Heart left ventricle (tissue), 16 donors: ENCODE measurements at regions of chr2 and their contacts with region 1.

Region 1: DNA sequence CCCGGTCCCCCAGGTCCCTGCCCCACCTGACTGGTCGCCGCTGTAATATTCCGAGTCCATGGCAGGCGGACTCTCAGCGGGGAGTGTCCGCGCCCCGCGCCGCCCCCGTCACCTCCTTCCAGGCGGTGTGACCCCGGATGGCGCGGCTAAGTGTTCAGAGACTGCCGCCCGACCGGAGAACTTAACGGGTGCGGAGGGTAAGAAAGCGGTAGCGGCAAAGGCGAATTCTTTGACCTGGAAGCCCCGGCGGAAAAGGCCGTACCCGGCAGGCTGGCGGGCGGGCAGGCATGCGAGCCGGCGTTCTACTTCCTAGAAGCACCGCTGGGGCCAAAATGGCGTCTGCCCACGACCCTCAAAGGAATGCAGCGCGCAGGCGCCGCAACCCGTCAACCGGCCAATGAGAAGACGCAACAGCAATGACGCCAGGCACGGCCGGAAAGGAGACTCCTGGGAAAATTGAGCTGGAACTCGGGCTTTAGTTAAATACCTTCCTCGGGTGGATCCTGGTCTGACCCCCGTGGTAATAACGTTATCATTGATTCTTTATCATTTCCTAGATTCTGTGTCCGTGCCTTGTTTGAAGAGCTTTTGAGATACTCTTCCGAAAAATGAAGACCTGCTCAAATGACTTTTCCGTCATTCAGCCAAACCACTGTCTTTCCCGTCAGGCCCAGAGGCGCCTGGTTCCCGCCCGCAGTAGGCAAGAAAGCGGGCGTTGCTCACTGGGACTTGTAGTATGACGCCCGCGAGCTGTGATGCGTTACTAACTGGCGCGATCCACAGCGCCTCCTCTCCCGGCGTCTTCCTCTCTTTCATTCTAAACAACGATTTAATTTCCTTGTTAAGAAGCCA is at the start of gene IWS1:
- DNase-seq: peak; percentile 95 to 98 (median 97)
- ATAC-seq: peak; percentile 96 to 98 (median 97)
- H3K4me3 ChIP-seq: peak within 1 kb of the TSS; percentile 81 to 100 (median 96)
- H3K27ac ChIP-seq: peak within 1 kb of the TSS; percentile 80 to 98 (median 95)
- H3K4me1 ChIP-seq: peaks cover 0 to 31% (median 14%) of the 10 kb centered on the region in 12 donors
- H3K27me3 ChIP-seq: no peaks in the 10 kb centered on the region
- CTCF ChIP-seq: peak; percentile 9 to 51 (median 37)
- POLR2A ChIP-seq: peak in 1 of 2 donors; percentile 56
- total RNA-seq, gene IWS1: 37.6 to 62.2 (median 45.8) TPM

Region 2: GRCh38 chr2:127379712-127380355 is 146.5 kb before region 1 on chr2:
- intact Hi-C with region 1: loop called in 1 of 10 experiments (anchors 5 kb)
- DNase-seq: no peak
- ATAC-seq: no peak
- H3K4me3 ChIP-seq: no peak overlapping the region
- H3K27ac ChIP-seq: no peak overlapping the region
- H3K4me1 ChIP-seq: peaks cover 0 to 64% (median 44%) of the 10 kb centered on the region in 12 donors
- H3K27me3 ChIP-seq: no peaks in the 10 kb centered on the region
- CTCF ChIP-seq: no peak
- POLR2A ChIP-seq: no peak

Region 3: DNA sequence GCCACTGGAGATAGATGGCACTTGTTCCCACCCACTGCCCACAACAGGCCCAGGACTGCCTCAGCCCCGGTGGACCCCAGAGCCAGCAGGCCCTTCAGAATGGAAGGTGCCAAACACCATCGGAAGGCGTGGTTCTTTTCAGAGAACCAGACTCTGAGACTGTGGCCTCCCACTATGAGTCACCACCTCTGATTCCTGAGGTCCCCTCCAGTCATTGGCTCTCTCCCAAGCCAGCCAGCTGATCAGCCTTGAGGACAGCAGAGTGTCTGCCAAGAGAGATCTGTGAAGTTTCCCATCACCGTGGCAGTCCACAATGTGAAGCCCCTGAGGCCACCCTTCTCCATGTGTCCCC is 128.2 kb before region 1 on chr2:
- intact Hi-C with region 1: no loop called
- DNase-seq: peak; percentile 79 to 97 (median 88)
- ATAC-seq: peak; percentile 81 to 97 (median 94)
- H3K4me3 ChIP-seq: no peak overlapping the region
- H3K27ac ChIP-seq: no peak overlapping the region
- H3K4me1 ChIP-seq: peaks cover 0 to 22% (median 9%) of the 10 kb centered on the region in 12 donors
- H3K27me3 ChIP-seq: no peaks in the 10 kb centered on the region
- CTCF ChIP-seq: no peak
- POLR2A ChIP-seq: no peak

Region 4: DNA sequence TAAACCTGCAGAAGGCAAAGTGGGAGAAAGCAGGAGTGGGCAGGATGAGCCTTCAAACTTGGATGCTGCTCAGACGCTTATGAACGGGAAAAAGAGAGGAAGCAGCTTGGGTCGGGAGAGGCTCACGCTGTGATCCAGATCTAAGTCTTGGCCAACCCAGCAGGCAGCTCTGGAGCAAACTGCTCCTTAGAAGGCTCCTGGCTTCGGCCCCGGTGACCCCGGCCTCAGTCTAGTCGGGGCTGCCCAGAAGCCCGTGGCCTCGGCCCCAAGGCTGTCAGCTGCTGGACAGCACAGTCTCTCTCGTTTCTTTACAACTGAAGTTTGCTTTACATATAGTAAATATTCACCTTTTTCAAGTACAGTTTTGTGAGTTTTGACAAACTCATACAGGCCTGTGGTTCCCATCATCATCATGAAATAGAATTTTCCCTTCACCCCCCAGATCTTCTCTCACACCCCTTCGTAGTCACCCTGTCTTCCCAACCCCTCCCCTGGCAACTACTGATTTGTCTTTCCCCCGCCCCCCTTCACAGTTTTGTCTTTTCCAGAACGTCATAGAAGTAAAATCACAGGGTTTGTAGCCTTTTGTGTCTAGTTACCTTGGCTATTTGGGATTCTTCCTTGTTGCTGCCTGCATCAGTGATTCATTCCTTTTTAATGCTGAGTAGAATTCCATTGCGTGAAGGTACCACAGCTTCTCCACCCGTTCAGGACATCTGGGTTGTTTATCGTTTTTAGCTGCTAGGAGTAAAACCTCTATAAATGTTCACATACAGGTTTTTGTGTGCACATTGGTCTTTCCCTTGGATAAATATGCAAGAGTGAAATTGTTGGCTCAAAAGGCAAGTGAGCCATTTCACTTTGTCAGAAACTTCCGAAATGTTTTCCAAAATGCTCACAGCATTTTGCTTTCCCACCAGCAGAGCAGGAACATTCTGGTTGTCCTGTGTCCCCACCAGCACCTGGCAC is 44.2 kb after region 1 on chr2:
- intact Hi-C with region 1: loop called in 1 of 10 experiments (anchors 5 kb)
- DNase-seq: peak in 2 of 5 donors; percentile 39 to 56
- ATAC-seq: peak in 3 of 4 donors; percentile 23 to 48 (median 34)
- H3K4me3 ChIP-seq: no peak overlapping the region
- H3K27ac ChIP-seq: peak overlapping the region in 1 of 12 donors; percentile 34
- H3K4me1 ChIP-seq: peaks cover 3 to 38% (median 19%) of the 10 kb centered on the region in 12 donors
- H3K27me3 ChIP-seq: no peaks in the 10 kb centered on the region
- CTCF ChIP-seq: no peak
- POLR2A ChIP-seq: no peak

Region 5: DNA sequence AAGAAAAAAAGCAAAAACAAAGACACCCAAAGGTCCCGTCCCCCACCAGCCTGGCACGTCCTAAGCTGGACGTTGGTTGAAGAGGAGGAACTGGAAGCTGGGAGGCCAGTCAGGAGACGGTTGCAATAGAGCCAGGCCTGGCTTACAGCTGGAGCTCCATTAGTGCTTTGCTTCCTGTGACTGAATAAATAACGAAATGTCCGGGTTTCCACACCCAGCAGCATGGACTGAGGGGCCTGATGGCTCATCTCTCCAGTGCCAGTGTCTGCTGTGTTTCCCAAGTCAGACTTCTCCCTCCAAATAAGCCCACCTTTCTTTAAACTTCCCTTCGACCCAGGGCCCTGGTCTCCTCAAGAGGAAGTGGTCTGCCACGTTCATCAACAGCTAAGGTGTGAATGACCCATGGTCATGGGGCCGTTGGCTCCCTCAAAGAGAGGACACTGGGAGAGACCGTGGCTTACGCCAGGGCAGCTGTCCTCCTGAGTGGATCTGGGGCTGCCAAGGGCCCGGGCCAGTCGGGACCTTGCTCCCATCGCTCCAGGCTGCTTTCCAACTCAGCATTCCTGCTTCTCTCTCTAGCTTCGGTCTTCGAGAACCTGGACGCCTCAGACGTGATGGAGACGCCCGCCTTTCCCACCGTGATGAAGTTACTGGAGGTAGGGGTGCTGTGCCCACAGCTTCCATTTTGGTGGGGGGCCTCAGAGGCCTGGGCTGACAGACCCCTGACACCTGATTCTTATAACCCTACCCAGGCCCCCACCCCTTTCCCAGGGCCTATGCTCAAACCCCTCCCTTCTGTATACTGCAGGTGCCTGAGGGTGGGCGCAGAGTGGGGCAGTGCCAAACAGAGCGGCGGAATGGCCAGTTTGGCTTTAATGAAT is 54.0 kb after region 1 on chr2:
- intact Hi-C with region 1: loop called in 1 of 10 experiments (anchors 5 kb)
- DNase-seq: no peak
- ATAC-seq: no peak
- H3K4me3 ChIP-seq: no peak overlapping the region
- H3K27ac ChIP-seq: no peak overlapping the region
- H3K4me1 ChIP-seq: peaks cover 0 to 15% (median 10%) of the 10 kb centered on the region in 12 donors
- H3K27me3 ChIP-seq: no peaks in the 10 kb centered on the region
- CTCF ChIP-seq: no peak
- POLR2A ChIP-seq: no peak

Region 6: DNA sequence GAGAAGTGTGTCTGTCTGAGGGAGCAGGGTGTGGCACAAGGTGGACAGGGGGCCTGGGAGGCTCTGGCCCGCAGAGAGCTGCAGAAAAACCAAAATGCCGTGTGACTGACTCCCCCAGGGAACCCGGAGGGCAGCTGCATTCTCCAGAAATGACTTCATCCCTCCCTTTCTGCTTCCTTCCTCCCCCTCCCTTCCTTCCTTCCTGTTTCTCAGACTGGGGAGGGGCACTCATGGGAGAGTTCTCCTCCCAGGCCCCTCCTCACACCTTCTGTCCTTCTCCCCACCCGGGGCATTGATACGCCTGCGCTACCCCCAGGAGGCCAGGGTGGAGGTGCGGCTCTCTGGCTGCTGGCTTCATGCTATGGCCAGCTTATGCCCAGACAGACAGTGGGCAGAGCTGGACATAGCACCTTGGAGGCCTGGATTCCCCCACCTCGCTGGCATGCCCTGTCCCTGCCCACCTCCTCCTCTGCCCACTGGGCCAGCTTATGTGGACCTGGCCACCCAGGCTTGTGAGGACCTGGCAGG is 111.4 kb after region 1 on chr2:
- intact Hi-C with region 1: loop called in 1 of 10 experiments (anchors 5 kb)
- DNase-seq: peak; percentile 65 to 78 (median 69)
- ATAC-seq: peak; percentile 11 to 59 (median 20)
- H3K4me3 ChIP-seq: peak overlapping the region in 1 of 12 donors; percentile 1
- H3K27ac ChIP-seq: peak overlapping the region; percentile 76 to 96 (median 89)
- H3K4me1 ChIP-seq: peaks cover 20 to 90% (median 66%) of the 10 kb centered on the region in 12 donors
- H3K27me3 ChIP-seq: no peaks in the 10 kb centered on the region
- CTCF ChIP-seq: no peak
- POLR2A ChIP-seq: no peak

Region 7: DNA sequence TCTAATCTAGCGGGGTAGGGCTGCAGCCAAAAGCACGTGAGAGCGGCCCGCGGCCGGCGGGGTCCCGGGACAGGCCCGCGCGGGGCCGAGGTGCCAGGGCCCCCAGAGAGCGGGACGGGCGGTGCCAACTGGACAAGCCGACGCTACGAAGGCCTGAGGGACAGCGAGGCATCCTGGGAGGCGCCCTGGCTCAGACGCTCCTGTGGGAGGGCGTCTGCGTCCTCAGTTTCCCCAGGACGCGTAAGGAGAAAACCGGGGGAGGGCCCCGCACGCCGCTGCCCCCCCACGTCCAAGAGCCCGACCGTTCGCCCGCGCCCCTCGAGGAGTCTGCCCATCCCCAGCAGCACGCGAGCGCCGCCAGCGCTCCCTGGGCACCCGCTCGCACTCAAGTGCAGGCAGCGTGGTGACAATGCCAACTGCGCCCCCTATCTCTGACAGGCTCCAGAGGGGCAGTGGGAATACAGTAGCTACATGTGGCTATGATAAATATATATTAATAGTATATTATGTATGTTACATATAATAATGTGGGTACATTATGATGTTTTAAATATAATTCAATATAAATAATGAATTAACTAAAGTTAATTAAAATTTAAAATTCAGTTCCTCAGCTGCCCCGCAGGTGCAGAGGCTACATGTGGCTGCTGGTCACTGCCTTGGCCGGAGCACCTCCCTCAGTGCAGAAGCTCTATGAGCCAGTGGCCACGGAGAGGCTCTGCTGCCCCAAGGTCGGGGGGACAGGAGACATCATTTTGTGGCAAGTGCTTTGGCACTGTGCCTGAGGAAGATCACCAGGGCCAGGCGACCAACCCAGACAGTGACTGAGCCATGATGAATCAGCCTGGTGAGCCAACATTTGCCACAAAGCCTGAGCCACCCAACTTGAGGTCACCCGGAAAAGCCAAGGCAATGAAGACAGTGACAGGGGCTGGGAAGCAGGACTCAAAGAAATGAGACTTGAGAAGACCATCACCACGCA is 169.4 kb after region 1 on chr2:
- intact Hi-C with region 1: loop called in 5 of 10 experiments (anchors 5 to 10 kb)
- DNase-seq: peak; percentile 78 to 89 (median 84)
- ATAC-seq: peak; percentile 65 to 91 (median 88)
- H3K4me3 ChIP-seq: peak overlapping the region in 10 of 12 donors; percentile 23 to 55 (median 46)
- H3K27ac ChIP-seq: peak overlapping the region in 5 of 12 donors; percentile 23 to 72 (median 36)
- H3K4me1 ChIP-seq: peaks cover 0 to 18% (median 8%) of the 10 kb centered on the region in 12 donors
- H3K27me3 ChIP-seq: no peaks in the 10 kb centered on the region
- CTCF ChIP-seq: peak; percentile 40 to 85 (median 70)
- POLR2A ChIP-seq: no peak

Region 8: GRCh38 chr2:127701193-127701650 is 174.8 kb after region 1 on chr2 and contains the start of gene SFT2D3:
- intact Hi-C with region 1: loop called in 5 of 10 experiments (anchors 5 to 10 kb)
- DNase-seq: peak; percentile 93 to 95 (median 95)
- ATAC-seq: peak; percentile 88 to 94 (median 88)
- H3K4me3 ChIP-seq: peak within 1 kb of the TSS; percentile 39 to 88 (median 69)
- H3K27ac ChIP-seq: peak within 1 kb of the TSS; percentile 90 to 99 (median 96)
- H3K4me1 ChIP-seq: peaks cover 0 to 45% (median 38%) of the 10 kb centered on the region in 12 donors
- H3K27me3 ChIP-seq: no peaks in the 10 kb centered on the region
- CTCF ChIP-seq: no peak
- POLR2A ChIP-seq: peak in 1 of 2 donors; percentile 90
- total RNA-seq, gene SFT2D3: 2.4 to 5.2 (median 3.7) TPM